ENCODE measurements at regions of chr12 and their contacts with region 1.

Region 1: DNA sequence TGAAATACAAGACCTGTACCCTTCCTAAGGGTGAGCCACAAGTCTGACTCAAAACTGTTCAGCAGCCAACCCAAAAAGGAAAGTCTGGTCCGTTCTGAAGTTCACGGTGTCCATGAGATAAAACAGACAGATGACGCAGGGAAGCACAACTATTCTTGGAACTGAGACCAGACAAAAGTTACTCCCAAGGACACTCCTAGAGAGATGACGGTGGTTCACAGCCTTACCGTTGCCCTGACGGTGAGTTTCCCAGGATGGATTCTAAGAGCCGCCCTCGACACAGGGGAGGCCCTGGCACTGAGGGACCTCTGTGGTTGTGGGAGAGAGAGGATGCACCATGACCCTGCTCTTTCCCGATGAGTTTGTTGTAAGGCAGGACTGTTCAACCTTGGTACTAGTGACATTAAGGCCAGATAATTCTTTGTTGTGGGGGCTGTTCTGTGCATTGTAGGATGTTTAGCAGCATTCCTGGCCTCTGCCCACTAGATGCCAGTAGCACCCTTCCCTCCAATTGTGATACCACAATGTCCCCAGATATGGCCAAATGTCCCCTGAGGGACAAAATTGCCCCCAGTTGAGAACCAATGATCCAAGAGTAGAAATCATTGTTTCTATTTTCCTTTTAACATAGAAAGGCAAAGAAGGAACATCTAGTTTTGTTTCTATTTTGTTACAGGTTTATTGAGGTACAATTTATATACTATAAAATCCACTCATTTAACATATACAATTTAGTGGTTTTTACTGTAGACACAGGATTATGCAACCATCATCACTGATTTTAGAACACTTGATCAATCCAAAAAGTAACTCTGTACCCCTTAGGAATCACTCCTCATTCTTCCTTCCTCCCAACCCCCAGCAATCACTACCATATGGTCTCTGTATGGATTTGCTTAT is 23.0 kb downstream of the OR10P1 start:
- DNase-seq: no peak
- H3K4me3 ChIP-seq: no peak overlapping the region
- H3K4me3 Mint-ChIP-seq: no peak overlapping the region
- H3K27ac ChIP-seq: no peak overlapping the region
- H3K27ac Mint-ChIP-seq: peak overlapping the region in 1 of 8 donors; percentile 51
- H3K4me1 ChIP-seq: no peaks in the 10 kb centered on the region
- H3K4me1 Mint-ChIP-seq: peaks cover 0 to 4% (median 1%) of the 10 kb centered on the region in 3 donors
- H3K27me3 ChIP-seq: peaks cover 4% of the 10 kb centered on the region
- H3K27me3 Mint-ChIP-seq: peaks cover 4 to 9% of the 10 kb centered on the region in 2 donors

Region 2: DNA sequence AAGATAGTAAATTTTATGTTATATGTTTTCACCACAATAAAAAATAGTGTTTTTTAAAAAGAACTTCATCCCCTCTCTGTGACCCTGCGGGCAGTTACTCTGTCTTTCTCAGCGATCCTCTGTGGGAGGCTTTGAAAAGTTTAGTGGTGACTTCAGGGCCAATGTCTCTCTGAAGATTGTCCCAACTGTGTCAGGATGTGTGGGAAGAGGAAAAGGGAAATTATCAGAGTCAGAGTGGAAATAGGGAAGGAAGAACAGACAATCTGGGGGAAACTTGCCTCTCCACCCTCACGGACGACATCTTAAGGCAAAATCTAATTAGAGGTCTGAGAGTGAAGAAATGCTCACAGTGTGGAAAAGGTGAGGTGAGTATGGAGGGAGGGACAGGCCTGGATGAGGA is 26.6 kb before region 1 on chr12:
- CTCF ChIA-PET with region 1: interaction called, 10 read pairs
- POLR2A ChIA-PET with region 1: no interaction called
- DNase-seq: no peak
- H3K4me3 ChIP-seq: no peak overlapping the region
- H3K4me3 Mint-ChIP-seq: no peak overlapping the region
- H3K27ac ChIP-seq: no peak overlapping the region
- H3K27ac Mint-ChIP-seq: no peak overlapping the region
- H3K4me1 ChIP-seq: peaks cover 12% of the 10 kb centered on the region
- H3K4me1 Mint-ChIP-seq: peaks cover 6 to 14% (median 10%) of the 10 kb centered on the region in 3 donors
- H3K27me3 ChIP-seq: no peaks in the 10 kb centered on the region
- H3K27me3 Mint-ChIP-seq: peaks cover 12 to 31% of the 10 kb centered on the region in 2 donors

Region 3: GRCh38 chr12:55642669-55643068 is 17.1 kb before region 1 on chr12:
- CTCF ChIA-PET with region 1: interaction called, 108 read pairs
- POLR2A ChIA-PET with region 1: interaction called, 4 read pairs
- DNase-seq: no peak
- H3K4me3 ChIP-seq: no peak overlapping the region
- H3K4me3 Mint-ChIP-seq: no peak overlapping the region
- H3K27ac ChIP-seq: no peak overlapping the region
- H3K27ac Mint-ChIP-seq: peak overlapping the region in 2 of 8 donors; percentile 9 to 13
- H3K4me1 ChIP-seq: peaks cover 12% of the 10 kb centered on the region
- H3K4me1 Mint-ChIP-seq: peaks cover 14 to 30% (median 28%) of the 10 kb centered on the region in 3 donors
- H3K27me3 ChIP-seq: no peaks in the 10 kb centered on the region
- H3K27me3 Mint-ChIP-seq: peaks cover 0 to 1% of the 10 kb centered on the region in 2 donors

Region 4: DNA sequence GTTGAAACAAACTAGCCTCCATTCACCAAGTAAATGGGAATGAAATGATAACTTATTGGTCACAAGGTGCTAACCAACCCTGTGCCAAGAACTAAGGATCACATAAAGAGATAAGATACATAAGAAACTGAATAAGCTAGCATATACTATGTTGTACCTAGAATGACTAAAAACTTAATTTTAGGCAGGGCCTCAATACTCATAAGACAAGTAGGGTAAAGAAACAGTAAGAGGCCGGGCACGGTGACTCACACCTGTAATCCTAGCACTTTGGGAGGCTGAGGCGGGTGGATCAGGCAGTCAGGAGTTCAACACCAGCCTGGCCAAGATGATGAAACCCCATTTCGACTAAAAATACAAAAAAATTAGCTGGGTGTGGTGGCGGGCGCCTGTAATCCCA is 100.9 kb after region 1 on chr12:
- CTCF ChIA-PET with region 1: no interaction called
- POLR2A ChIA-PET with region 1: no interaction called
- DNase-seq: no peak
- H3K4me3 ChIP-seq: no peak overlapping the region
- H3K4me3 Mint-ChIP-seq: no peak overlapping the region
- H3K27ac ChIP-seq: no peak overlapping the region
- H3K27ac Mint-ChIP-seq: peak overlapping the region in 4 of 8 donors; percentile 24 to 84 (median 52)
- H3K4me1 ChIP-seq: no peaks in the 10 kb centered on the region
- H3K4me1 Mint-ChIP-seq: peaks cover 4 to 13% (median 5%) of the 10 kb centered on the region in 3 donors
- H3K27me3 ChIP-seq: no peaks in the 10 kb centered on the region
- H3K27me3 Mint-ChIP-seq: no peaks in the 10 kb centered on the region

Measured in CD8-positive, alpha-beta memory T cell (primary cell).